ENCODE measurements at regions of chr22 and their contacts with region 1.

Region 1: GRCh38 chr22:31080848-31081649 is at the start of gene SMTN:
- DNase-seq: peak; percentile 74 to 94 (median 85)
- ATAC-seq: peak; percentile 69
- H3K4me3 ChIP-seq: peak within 1 kb of the TSS; percentile 72
- H3K4me3 Mint-ChIP-seq: peak within 1 kb of the TSS; percentile 90
- H3K27ac ChIP-seq: no peak within 1 kb of the TSS
- H3K27ac Mint-ChIP-seq: no peak within 1 kb of the TSS
- H3K4me1 ChIP-seq: peaks cover 53% of the 10 kb centered on the region
- H3K4me1 Mint-ChIP-seq: peaks cover 33% of the 10 kb centered on the region
- H3K27me3 ChIP-seq: no peaks in the 10 kb centered on the region
- H3K27me3 Mint-ChIP-seq: no peaks in the 10 kb centered on the region
- CTCF ChIP-seq: no peak
- total RNA-seq, gene SMTN: 2.9 TPM

Region 2: DNA sequence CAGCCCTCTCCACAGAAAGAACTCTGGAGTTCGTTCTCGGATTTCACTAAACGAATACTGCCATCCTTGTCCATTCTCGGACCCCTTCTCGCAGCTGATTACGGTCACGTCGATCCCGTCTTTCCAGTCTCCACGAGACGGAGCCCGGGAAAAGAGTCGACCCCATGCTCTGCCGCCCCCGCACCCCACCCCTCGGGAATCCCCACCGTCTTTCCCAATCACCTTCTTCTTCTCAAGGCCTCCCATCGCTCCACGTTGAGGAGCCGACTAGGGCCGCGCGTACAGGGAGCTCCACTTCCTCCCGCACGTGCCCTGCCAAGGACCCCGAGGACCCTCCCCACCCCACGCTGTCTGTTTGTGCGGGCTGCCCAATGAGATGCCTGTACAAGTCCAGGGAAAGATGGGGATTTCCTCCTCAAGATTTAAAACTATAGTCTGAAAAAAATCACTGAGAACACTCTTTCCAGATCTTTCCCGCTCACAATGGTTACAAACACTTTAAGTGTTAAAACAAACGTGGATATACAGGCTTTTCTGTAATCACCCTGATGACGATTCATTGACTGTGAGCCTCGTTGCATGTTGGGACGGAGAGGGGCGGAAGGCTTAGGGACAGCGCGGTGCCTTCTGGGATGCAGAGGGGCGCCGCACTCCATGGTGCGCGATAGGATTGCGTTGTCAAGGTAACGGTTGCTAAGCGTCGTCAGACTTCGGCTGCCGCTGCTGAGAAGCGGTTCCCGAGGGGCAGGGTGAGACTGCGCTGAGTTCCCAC is 489.3 kb before region 1 on chr22 and contains the start of gene PES1:
- CTCF ChIA-PET with region 1: no interaction called
- POLR2A ChIA-PET with region 1: no interaction called
- intact Hi-C with region 1: loop called in 1 of 2 experiments (anchors 2 kb)
- DNase-seq: peak; percentile 91 to 99 (median 94)
- ATAC-seq: peak; percentile 96
- H3K4me3 ChIP-seq: peak within 1 kb of the TSS; percentile 96
- H3K4me3 Mint-ChIP-seq: no peak within 1 kb of the TSS
- H3K27ac ChIP-seq: peak within 1 kb of the TSS; percentile 85 to 97
- H3K27ac Mint-ChIP-seq: no peak within 1 kb of the TSS
- H3K4me1 ChIP-seq: peaks cover 16% of the 10 kb centered on the region
- H3K4me1 Mint-ChIP-seq: no peaks in the 10 kb centered on the region
- H3K27me3 ChIP-seq: no peaks in the 10 kb centered on the region
- H3K27me3 Mint-ChIP-seq: no peaks in the 10 kb centered on the region
- CTCF ChIP-seq: no peak
- total RNA-seq, gene PES1: 28.4 to 30.5 TPM

Region 3: GRCh38 chr22:30667494-30668385 is 413.3 kb before region 1 on chr22 and contains the start of gene DUSP18:
- CTCF ChIA-PET with region 1: no interaction called
- POLR2A ChIA-PET with region 1: interaction called, 3 read pairs
- intact Hi-C with region 1: loop called in 1 of 2 experiments (anchors 10 kb)
- DNase-seq: peak; percentile 89 to 98 (median 94)
- ATAC-seq: peak; percentile 90
- H3K4me3 ChIP-seq: peak within 1 kb of the TSS; percentile 97
- H3K4me3 Mint-ChIP-seq: peak within 1 kb of the TSS; percentile 93
- H3K27ac ChIP-seq: no peak within 1 kb of the TSS
- H3K27ac Mint-ChIP-seq: peak within 1 kb of the TSS; percentile 74
- H3K4me1 ChIP-seq: peaks cover 27% of the 10 kb centered on the region
- H3K4me1 Mint-ChIP-seq: peaks cover 15% of the 10 kb centered on the region
- H3K27me3 ChIP-seq: no peaks in the 10 kb centered on the region
- H3K27me3 Mint-ChIP-seq: no peaks in the 10 kb centered on the region
- CTCF ChIP-seq: no peak
- total RNA-seq, gene DUSP18: 5.7 to 6.2 TPM

Region 4: DNA sequence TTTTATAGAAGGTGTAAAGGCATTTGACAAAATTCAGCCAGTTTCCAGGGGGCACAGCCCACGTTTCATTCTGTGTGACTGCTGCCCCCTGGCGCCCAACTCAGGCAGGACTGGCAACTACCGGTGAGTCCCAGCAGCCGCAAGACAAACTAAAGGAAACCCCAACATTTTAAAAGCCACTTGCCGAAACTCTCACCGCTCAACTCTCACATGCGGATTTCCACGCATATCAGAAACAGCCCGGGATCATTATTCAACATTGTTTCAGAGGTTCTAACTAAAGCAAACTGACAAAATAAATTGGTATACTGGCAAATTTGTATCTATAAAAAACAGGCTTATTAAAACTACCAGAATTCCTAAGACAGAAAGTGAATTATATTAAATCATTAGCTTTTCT is 160.6 kb before region 1 on chr22:
- CTCF ChIA-PET with region 1: interaction called, 9 read pairs
- POLR2A ChIA-PET with region 1: interaction called, 7 read pairs
- intact Hi-C with region 1: loop called in 1 of 2 experiments (anchors 2 kb)
- DNase-seq: peak; percentile 74 to 91 (median 82)
- ATAC-seq: peak; percentile 80
- H3K4me3 ChIP-seq: peak overlapping the region; percentile 1
- H3K4me3 Mint-ChIP-seq: peak overlapping the region; percentile 60
- H3K27ac ChIP-seq: no peak overlapping the region
- H3K27ac Mint-ChIP-seq: peak overlapping the region; percentile 25
- H3K4me1 ChIP-seq: peaks cover 23% of the 10 kb centered on the region
- H3K4me1 Mint-ChIP-seq: peaks cover 22% of the 10 kb centered on the region
- H3K27me3 ChIP-seq: no peaks in the 10 kb centered on the region
- H3K27me3 Mint-ChIP-seq: no peaks in the 10 kb centered on the region
- CTCF ChIP-seq: peak; percentile 99

Region 5: GRCh38 chr22:30947816-30948454 is 133.1 kb before region 1 on chr22:
- CTCF ChIA-PET with region 1: interaction called, 14 read pairs
- POLR2A ChIA-PET with region 1: interaction called, 9 read pairs
- intact Hi-C with region 1: loop called (anchors 1 kb)
- DNase-seq: peak in 3 of 14 experiments; percentile 60 to 66 (median 65)
- ATAC-seq: peak; percentile 49
- H3K4me3 ChIP-seq: no peak overlapping the region
- H3K4me3 Mint-ChIP-seq: no peak overlapping the region
- H3K27ac ChIP-seq: no peak overlapping the region
- H3K27ac Mint-ChIP-seq: no peak overlapping the region
- H3K4me1 ChIP-seq: peaks cover 39% of the 10 kb centered on the region
- H3K4me1 Mint-ChIP-seq: peaks cover 65% of the 10 kb centered on the region
- H3K27me3 ChIP-seq: no peaks in the 10 kb centered on the region
- H3K27me3 Mint-ChIP-seq: no peaks in the 10 kb centered on the region
- CTCF ChIP-seq: peak; percentile 67

Region 6: GRCh38 chr22:31148953-31149627 is 68.0 kb after region 1 on chr22:
- CTCF ChIA-PET with region 1: no interaction called
- POLR2A ChIA-PET with region 1: no interaction called
- intact Hi-C with region 1: loop called in 1 of 2 experiments (anchors 5 kb)
- DNase-seq: peak in 8 of 14 experiments; percentile 6 to 57 (median 24)
- ATAC-seq: no peak
- H3K4me3 ChIP-seq: no peak overlapping the region
- H3K4me3 Mint-ChIP-seq: no peak overlapping the region
- H3K27ac ChIP-seq: no peak overlapping the region
- H3K27ac Mint-ChIP-seq: no peak overlapping the region
- H3K4me1 ChIP-seq: no peaks in the 10 kb centered on the region
- H3K4me1 Mint-ChIP-seq: no peaks in the 10 kb centered on the region
- H3K27me3 ChIP-seq: peaks cover 0 to 4% of the 10 kb centered on the region in 2 experiments
- H3K27me3 Mint-ChIP-seq: no peaks in the 10 kb centered on the region
- CTCF ChIP-seq: peak; percentile 28

Region 7: GRCh38 chr22:31272522-31273446 is 191.7 kb after region 1 on chr22:
- CTCF ChIA-PET with region 1: no interaction called
- POLR2A ChIA-PET with region 1: no interaction called
- intact Hi-C with region 1: loop called (anchors 5 to 10 kb)
- DNase-seq: peak in 9 of 14 experiments; percentile 38 to 79 (median 57)
- ATAC-seq: peak; percentile 70
- H3K4me3 ChIP-seq: no peak overlapping the region
- H3K4me3 Mint-ChIP-seq: peak overlapping the region; percentile 45
- H3K27ac ChIP-seq: peak overlapping the region in 1 of 2 donors; percentile 3
- H3K27ac Mint-ChIP-seq: peak overlapping the region; percentile 88
- H3K4me1 ChIP-seq: peaks cover 62% of the 10 kb centered on the region
- H3K4me1 Mint-ChIP-seq: peaks cover 74% of the 10 kb centered on the region
- H3K27me3 ChIP-seq: no peaks in the 10 kb centered on the region
- H3K27me3 Mint-ChIP-seq: no peaks in the 10 kb centered on the region
- CTCF ChIP-seq: peak; percentile 78